Naive thymus-derived CD4-positive, alpha-beta T cell (primary cell): ENCODE measurements at regions of chr1 and their contacts with region 1.

Region 1: GRCh38 chr1:2133039-2133878 is 61.3 kb downstream of the FAAP20 start:
- DNase-seq: peak; percentile 93 to 97 (median 96)
- ATAC-seq: peak; percentile 94
- H3K4me3 ChIP-seq: peak overlapping the region; percentile 66
- H3K4me3 Mint-ChIP-seq: peak overlapping the region; percentile 73 to 88 (median 83)
- H3K27ac ChIP-seq: peak overlapping the region; percentile 80
- H3K27ac Mint-ChIP-seq: peak overlapping the region; percentile 54 to 96 (median 93)
- H3K4me1 ChIP-seq: peaks cover 10% of the 10 kb centered on the region in 2 donors
- H3K4me1 Mint-ChIP-seq: peaks cover 5 to 32% (median 17%) of the 10 kb centered on the region in 7 donors
- H3K27me3 ChIP-seq: no peaks in the 10 kb centered on the region
- H3K27me3 Mint-ChIP-seq: no peaks in the 10 kb centered on the region

Region 2: GRCh38 chr1:1665800-1666251 is 467.4 kb before region 1 on chr1:
- CTCF ChIA-PET with region 1: no interaction called
- POLR2A ChIA-PET with region 1: no interaction called
- intact Hi-C with region 1: no loop called
- DNase-seq: peak in 3 of 9 donors; percentile 20 to 36 (median 26)
- ATAC-seq: no peak
- H3K4me3 ChIP-seq: no peak overlapping the region
- H3K4me3 Mint-ChIP-seq: no peak overlapping the region
- H3K27ac ChIP-seq: no peak overlapping the region
- H3K27ac Mint-ChIP-seq: no peak overlapping the region
- H3K4me1 ChIP-seq: no peaks in the 10 kb centered on the region
- H3K4me1 Mint-ChIP-seq: peaks cover 0 to 6% (median 5%) of the 10 kb centered on the region in 7 donors
- H3K27me3 ChIP-seq: no peaks in the 10 kb centered on the region
- H3K27me3 Mint-ChIP-seq: no peaks in the 10 kb centered on the region

Region 3: GRCh38 chr1:2049718-2050427 is 83.4 kb before region 1 on chr1 and contains the start of gene PRKCZ:
- CTCF ChIA-PET with region 1: no interaction called
- POLR2A ChIA-PET with region 1: interaction called, 5 read pairs
- intact Hi-C with region 1: loop called in 1 of 2 experiments (anchors 1 kb)
- DNase-seq: peak; percentile 76 to 96 (median 92)
- ATAC-seq: peak; percentile 99
- H3K4me3 ChIP-seq: peak within 1 kb of the TSS; percentile 73
- H3K4me3 Mint-ChIP-seq: peak within 1 kb of the TSS; percentile 64 to 89 (median 80)
- H3K27ac ChIP-seq: peak within 1 kb of the TSS; percentile 70
- H3K27ac Mint-ChIP-seq: peak within 1 kb of the TSS in 6 of 9 donors; percentile 5 to 82 (median 50)
- H3K4me1 ChIP-seq: peaks cover 7 to 14% of the 10 kb centered on the region in 2 donors
- H3K4me1 Mint-ChIP-seq: peaks cover 10 to 35% (median 22%) of the 10 kb centered on the region in 7 donors
- H3K27me3 ChIP-seq: no peaks in the 10 kb centered on the region
- H3K27me3 Mint-ChIP-seq: peaks cover 0 to 45% (median 5%) of the 10 kb centered on the region in 5 donors
- total RNA-seq, gene PRKCZ: 3.6 to 29.6 (median 24.5) TPM

Region 4: DNA sequence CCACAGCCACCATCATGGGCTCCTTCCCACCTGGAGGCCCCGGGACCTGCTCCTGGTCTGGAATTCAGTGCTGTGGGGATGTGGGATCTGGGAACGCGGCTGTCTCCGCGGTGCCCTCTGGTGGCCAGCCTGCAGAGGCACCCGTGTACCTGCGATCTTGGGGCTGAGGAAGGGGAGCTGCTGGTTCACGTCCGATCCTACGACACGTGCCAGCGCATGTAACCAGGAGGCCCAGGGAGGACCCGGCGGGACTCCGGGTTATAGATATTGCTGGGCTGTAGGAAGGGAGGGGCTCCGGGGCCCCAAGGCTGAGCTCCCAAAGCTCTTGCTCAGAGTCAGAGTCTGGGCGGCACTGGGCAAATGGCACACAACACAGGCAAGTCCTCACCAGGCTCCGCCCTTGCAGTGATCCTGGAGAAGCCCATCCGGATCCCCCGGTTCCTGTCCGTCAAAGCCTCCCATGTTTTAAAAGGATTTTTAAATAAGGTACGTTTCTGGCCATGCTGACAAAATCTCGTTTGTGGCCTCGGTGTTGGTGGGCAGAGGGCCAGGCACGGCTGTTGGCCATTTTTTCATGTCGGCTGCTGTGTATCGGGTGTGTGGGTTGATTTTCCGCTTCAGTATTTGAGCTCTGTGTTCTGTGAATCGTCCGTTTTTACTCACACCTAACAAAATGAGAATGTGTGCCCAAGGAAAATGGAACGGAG is 41.2 kb after region 1 on chr1:
- CTCF ChIA-PET with region 1: interaction called, 15 read pairs
- POLR2A ChIA-PET with region 1: no interaction called
- intact Hi-C with region 1: loop called (anchors 1 kb)
- DNase-seq: peak in 6 of 9 donors; percentile 21 to 46 (median 34)
- ATAC-seq: peak; percentile 73
- H3K4me3 ChIP-seq: no peak overlapping the region
- H3K4me3 Mint-ChIP-seq: peak overlapping the region in 6 of 10 donors; percentile 38 to 71 (median 56)
- H3K27ac ChIP-seq: no peak overlapping the region
- H3K27ac Mint-ChIP-seq: no peak overlapping the region
- H3K4me1 ChIP-seq: no peaks in the 10 kb centered on the region
- H3K4me1 Mint-ChIP-seq: peaks cover 0 to 8% (median 4%) of the 10 kb centered on the region in 7 donors
- H3K27me3 ChIP-seq: no peaks in the 10 kb centered on the region
- H3K27me3 Mint-ChIP-seq: no peaks in the 10 kb centered on the region

Region 5: GRCh38 chr1:2205191-2205952 is 72.1 kb after region 1 on chr1:
- CTCF ChIA-PET with region 1: no interaction called
- POLR2A ChIA-PET with region 1: no interaction called
- intact Hi-C with region 1: loop called (anchors 1 kb)
- DNase-seq: peak; percentile 86 to 94 (median 93)
- ATAC-seq: peak; percentile 98
- H3K4me3 ChIP-seq: peak overlapping the region; percentile 70
- H3K4me3 Mint-ChIP-seq: peak overlapping the region; percentile 53 to 79 (median 68)
- H3K27ac ChIP-seq: peak overlapping the region; percentile 60
- H3K27ac Mint-ChIP-seq: peak overlapping the region in 5 of 9 donors; percentile 17 to 65 (median 56)
- H3K4me1 ChIP-seq: peaks cover 0 to 6% of the 10 kb centered on the region in 2 donors
- H3K4me1 Mint-ChIP-seq: peaks cover 0 to 9% (median 4%) of the 10 kb centered on the region in 7 donors
- H3K27me3 ChIP-seq: no peaks in the 10 kb centered on the region
- H3K27me3 Mint-ChIP-seq: peaks cover 0 to 4% (median 0%) of the 10 kb centered on the region in 5 donors

Region 6: DNA sequence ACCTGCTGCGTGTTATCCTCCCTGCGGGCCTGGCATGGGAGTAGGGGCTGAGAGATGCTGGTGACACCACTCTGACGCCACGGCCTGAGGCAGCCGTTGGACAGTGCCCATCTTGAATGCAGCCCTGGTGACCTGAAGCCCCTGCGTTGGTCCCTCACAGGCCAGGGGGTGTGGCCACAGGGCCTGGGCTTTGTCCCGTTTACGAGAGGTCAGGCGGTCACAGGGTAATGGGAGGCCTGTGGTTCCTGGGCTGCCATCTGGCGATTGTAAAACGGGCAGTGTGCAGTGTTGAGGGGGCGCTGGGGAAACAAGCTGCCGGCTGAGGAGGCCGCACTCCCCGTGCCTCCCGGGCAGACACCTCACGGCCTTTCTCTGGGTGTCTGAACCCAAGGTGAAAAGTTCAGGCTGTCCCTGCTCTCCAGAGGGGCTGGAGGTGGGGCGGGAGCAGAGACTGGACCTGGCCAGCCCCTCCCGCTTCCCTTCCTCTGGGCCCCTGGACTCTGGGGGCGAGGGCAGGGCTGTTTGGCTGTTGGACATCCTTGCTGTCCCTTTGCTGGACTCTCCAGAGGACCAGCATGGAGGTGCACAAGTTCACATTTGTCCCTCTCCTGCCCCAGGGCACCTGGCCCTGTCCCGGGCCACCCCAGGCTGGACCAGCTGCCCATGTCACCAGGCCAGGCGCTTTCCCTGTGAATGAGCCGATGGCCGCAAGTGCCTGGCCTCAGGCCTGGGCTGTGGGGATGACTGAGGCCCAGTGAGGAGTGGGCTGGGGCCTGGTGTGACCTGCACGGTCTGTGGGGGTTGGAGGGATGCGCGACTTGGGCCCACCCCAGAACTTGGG is 137.2 kb after region 1 on chr1:
- CTCF ChIA-PET with region 1: no interaction called
- POLR2A ChIA-PET with region 1: no interaction called
- intact Hi-C with region 1: no loop called
- DNase-seq: no peak
- ATAC-seq: no peak
- H3K4me3 ChIP-seq: no peak overlapping the region
- H3K4me3 Mint-ChIP-seq: peak overlapping the region in 1 of 10 donors; percentile 41
- H3K27ac ChIP-seq: peak overlapping the region; percentile 49
- H3K27ac Mint-ChIP-seq: peak overlapping the region in 3 of 9 donors; percentile 36 to 80 (median 60)
- H3K4me1 ChIP-seq: peaks cover 22 to 78% of the 10 kb centered on the region in 2 donors
- H3K4me1 Mint-ChIP-seq: peaks cover 14 to 77% (median 41%) of the 10 kb centered on the region in 7 donors
- H3K27me3 ChIP-seq: no peaks in the 10 kb centered on the region
- H3K27me3 Mint-ChIP-seq: no peaks in the 10 kb centered on the region

Region 7: GRCh38 chr1:2412519-2413233 is 279.4 kb after region 1 on chr1 and contains the start of gene PEX10:
- CTCF ChIA-PET with region 1: no interaction called
- POLR2A ChIA-PET with region 1: no interaction called
- intact Hi-C with region 1: loop called in 1 of 2 experiments (anchors 1 kb)
- DNase-seq: peak; percentile 95 to 100 (median 98)
- ATAC-seq: peak; percentile 97
- H3K4me3 ChIP-seq: peak within 1 kb of the TSS; percentile 71
- H3K4me3 Mint-ChIP-seq: peak within 1 kb of the TSS; percentile 83 to 91 (median 86)
- H3K27ac ChIP-seq: peak within 1 kb of the TSS; percentile 95
- H3K27ac Mint-ChIP-seq: peak within 1 kb of the TSS; percentile 31 to 94 (median 87)
- H3K4me1 ChIP-seq: peaks cover 37 to 45% of the 10 kb centered on the region in 2 donors
- H3K4me1 Mint-ChIP-seq: peaks cover 27 to 45% (median 35%) of the 10 kb centered on the region in 7 donors
- H3K27me3 ChIP-seq: no peaks in the 10 kb centered on the region
- H3K27me3 Mint-ChIP-seq: no peaks in the 10 kb centered on the region
- total RNA-seq, gene PEX10: 8.7 to 14.9 (median 12.3) TPM

Region 8: GRCh38 chr1:3796215-3797061 is 1663.2 kb after region 1 on chr1 and contains the start of gene LRRC47:
- CTCF ChIA-PET with region 1: no interaction called
- POLR2A ChIA-PET with region 1: no interaction called
- intact Hi-C with region 1: loop called in 1 of 2 experiments (anchors 5 kb)
- DNase-seq: peak; percentile 89 to 97 (median 94)
- ATAC-seq: peak; percentile 100
- H3K4me3 ChIP-seq: peak within 1 kb of the TSS; percentile 74
- H3K4me3 Mint-ChIP-seq: peak within 1 kb of the TSS; percentile 88 to 98 (median 93)
- H3K27ac ChIP-seq: peak within 1 kb of the TSS; percentile 69
- H3K27ac Mint-ChIP-seq: peak within 1 kb of the TSS; percentile 87 to 97 (median 93)
- H3K4me1 ChIP-seq: peaks cover 22 to 28% of the 10 kb centered on the region in 2 donors
- H3K4me1 Mint-ChIP-seq: peaks cover 8 to 52% (median 42%) of the 10 kb centered on the region in 7 donors
- H3K27me3 ChIP-seq: no peaks in the 10 kb centered on the region
- H3K27me3 Mint-ChIP-seq: peaks cover 9 to 11% (median 10%) of the 10 kb centered on the region in 5 donors
- total RNA-seq, gene LRRC47: 38.2 to 60.2 (median 43.9) TPM